Activated naive CD4-positive, alpha-beta T cell treated with anti-CD3 and anti-CD28 coated beads for 36 hours (primary cell): ENCODE measurements at regions of chrX and their contacts with region 1.

Region 1: GRCh38 chrX:120457766-120458180 is 11.3 kb downstream of the LAMP2 start:
- DNase-seq: peak; percentile 9
- H3K4me3 Mint-ChIP-seq: no peak overlapping the region
- H3K27ac Mint-ChIP-seq: peak overlapping the region; percentile 59
- H3K4me1 Mint-ChIP-seq: peaks cover 44% of the 10 kb centered on the region
- H3K27me3 Mint-ChIP-seq: no peaks in the 10 kb centered on the region

Region 2: GRCh38 chrX:120468825-120469525 is 11.2 kb after region 1 on chrX and contains the start of gene LAMP2:
- CTCF ChIA-PET with region 1: interaction called, 5 read pairs
- intact Hi-C with region 1: loop called (anchors 1 kb)
- DNase-seq: peak; percentile 87
- H3K4me3 Mint-ChIP-seq: peak within 1 kb of the TSS; percentile 86
- H3K27ac Mint-ChIP-seq: peak within 1 kb of the TSS; percentile 91
- H3K4me1 Mint-ChIP-seq: peaks cover 15% of the 10 kb centered on the region
- H3K27me3 Mint-ChIP-seq: no peaks in the 10 kb centered on the region
- total RNA-seq, gene LAMP2: 37.9 to 38.0 TPM